AG04450 (cell line): ENCODE measurements at regions of chr10 and their contacts with region 1.

Region 1: DNA sequence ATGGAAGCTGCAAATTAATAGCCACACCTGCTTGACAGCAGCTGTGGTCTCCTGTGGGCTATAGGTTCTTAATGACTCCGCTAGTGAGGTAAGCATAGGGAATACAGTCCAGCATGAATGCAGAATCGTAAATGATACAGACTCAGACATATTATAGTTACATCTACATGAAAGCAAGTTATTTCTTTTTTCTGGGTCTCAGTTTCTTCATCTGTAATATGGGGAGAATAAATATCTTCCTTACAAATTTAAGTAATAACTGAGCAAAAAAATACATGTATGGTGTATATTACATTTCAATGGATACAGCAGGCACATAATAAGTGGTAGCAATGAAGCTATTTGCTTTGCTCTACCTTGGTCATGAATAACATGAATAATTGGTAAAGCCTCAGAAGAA is 245.9 kb upstream of the RHOBTB1 start:
- DNase-seq: no peak
- H3K4me3 ChIP-seq: no peak overlapping the region
- H3K27ac ChIP-seq: no peak overlapping the region
- H3K27me3 ChIP-seq: no peaks in the 10 kb centered on the region
- CTCF ChIP-seq: no peak

Region 2: GRCh38 chr10:60989400-60989876 is 200.5 kb before region 1 on chr10:
- CTCF ChIA-PET with region 1: no interaction called
- POLR2A ChIA-PET with region 1: interaction called, 10 read pairs
- DNase-seq: no peak
- H3K4me3 ChIP-seq: no peak overlapping the region
- H3K27ac ChIP-seq: no peak overlapping the region
- H3K27me3 ChIP-seq: no peaks in the 10 kb centered on the region
- CTCF ChIP-seq: no peak

Region 3: DNA sequence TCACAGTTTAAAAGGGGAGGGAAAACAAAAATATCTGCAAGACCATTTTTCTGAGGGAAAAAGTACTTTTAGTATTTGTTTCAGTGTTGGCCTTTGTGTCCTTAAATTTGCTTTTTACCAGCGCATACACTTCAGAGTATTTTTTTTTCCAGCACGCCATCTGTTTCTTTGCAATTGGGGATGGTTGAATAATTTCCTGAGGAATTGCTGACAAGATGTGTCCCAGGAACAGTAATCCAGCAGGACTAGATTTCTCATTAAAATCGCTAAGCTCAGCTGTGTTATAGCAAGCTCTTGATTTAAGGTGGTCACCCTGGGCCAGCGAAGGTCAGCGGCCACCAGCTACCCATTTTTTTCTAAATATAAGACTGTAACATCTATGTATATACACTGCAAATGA is 89.0 kb before region 1 on chr10:
- CTCF ChIA-PET with region 1: no interaction called
- POLR2A ChIA-PET with region 1: no interaction called
- DNase-seq: no peak
- H3K4me3 ChIP-seq: no peak overlapping the region
- H3K27ac ChIP-seq: no peak overlapping the region
- H3K27me3 ChIP-seq: peaks cover 14% of the 10 kb centered on the region
- CTCF ChIP-seq: no peak